IMR-90 (cell line): ENCODE measurements at regions of chrX and their contacts with region 1.

Region 1: DNA sequence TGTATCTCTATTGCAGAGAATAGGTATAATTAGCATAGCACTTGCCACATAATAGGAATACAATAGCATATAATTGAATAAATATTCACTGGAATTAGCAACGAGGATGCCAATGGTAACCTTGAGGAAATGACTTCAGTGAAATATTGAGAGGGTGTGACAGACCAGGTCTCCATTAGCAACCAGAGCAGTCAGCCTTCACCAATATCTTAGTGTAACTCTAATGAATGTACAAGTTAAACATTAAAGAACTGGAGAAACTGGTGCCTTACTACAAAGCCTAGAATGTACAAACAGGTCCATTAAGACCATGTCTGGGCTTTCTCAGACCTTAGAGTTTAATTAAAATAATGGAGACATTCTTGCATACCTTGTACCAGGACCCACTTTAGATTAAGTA is 143.0 kb downstream of the MAGEB17 start:
- DNase-seq: no peak
- ATAC-seq: no peak
- H3K4me3 ChIP-seq: no peak overlapping the region
- H3K27ac ChIP-seq: no peak overlapping the region
- H3K4me1 ChIP-seq: no peaks in the 10 kb centered on the region
- H3K27me3 ChIP-seq: no peaks in the 10 kb centered on the region
- CTCF ChIP-seq: no peak
- POLR2A ChIP-seq: no peak
- RAD21 ChIP-seq: no peak

Region 2: GRCh38 chrX:15349046-15349445 is 961.3 kb before region 1 on chrX:
- CTCF ChIA-PET with region 1: no interaction called
- POLR2A ChIA-PET with region 1: no interaction called
- dilution Hi-C with region 1: no loop called
- in situ Hi-C with region 1: no loop called
- intact Hi-C with region 1: no loop called
- DNase-seq: peak; percentile 73
- ATAC-seq: peak; percentile 90
- H3K4me3 ChIP-seq: no peak overlapping the region
- H3K27ac ChIP-seq: no peak overlapping the region
- H3K4me1 ChIP-seq: no peaks in the 10 kb centered on the region
- H3K27me3 ChIP-seq: peaks cover 4% of the 10 kb centered on the region; the same call in 1 of the 2 replicates
- CTCF ChIP-seq: peak; percentile 66
- POLR2A ChIP-seq: no peak
- RAD21 ChIP-seq: peak; percentile 77

Region 3: DNA sequence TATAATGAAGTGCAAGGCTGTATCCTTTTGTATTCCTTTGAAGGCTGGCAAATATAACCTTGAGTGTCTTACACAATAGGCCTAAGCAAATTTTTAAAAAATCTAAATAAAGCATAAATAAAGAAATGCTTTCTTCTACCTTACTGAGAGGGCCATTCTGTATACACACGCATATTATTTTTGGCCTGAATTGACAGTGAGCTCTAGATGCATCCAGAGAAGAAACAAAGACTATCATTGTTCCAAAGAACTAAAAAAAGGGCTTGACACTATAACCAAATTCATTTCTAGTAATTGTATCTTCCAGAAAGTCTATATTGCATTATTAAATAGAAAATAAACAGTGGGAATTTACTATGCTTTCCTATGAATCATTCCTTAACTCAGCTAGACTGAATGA is 42.9 kb before region 1 on chrX:
- CTCF ChIA-PET with region 1: no interaction called
- POLR2A ChIA-PET with region 1: no interaction called
- dilution Hi-C with region 1: no loop called
- in situ Hi-C with region 1: no loop called
- intact Hi-C with region 1: loop called (anchors 2 kb)
- DNase-seq: no peak
- ATAC-seq: no peak
- H3K4me3 ChIP-seq: no peak overlapping the region
- H3K27ac ChIP-seq: no peak overlapping the region
- H3K4me1 ChIP-seq: no peaks in the 10 kb centered on the region
- H3K27me3 ChIP-seq: no peaks in the 10 kb centered on the region
- CTCF ChIP-seq: no peak
- POLR2A ChIP-seq: no peak
- RAD21 ChIP-seq: no peak

Region 4: GRCh38 chrX:16376056-16376455 is 65.7 kb after region 1 on chrX:
- CTCF ChIA-PET with region 1: no interaction called
- POLR2A ChIA-PET with region 1: no interaction called
- dilution Hi-C with region 1: no loop called
- in situ Hi-C with region 1: no loop called
- intact Hi-C with region 1: no loop called
- DNase-seq: no peak
- ATAC-seq: no peak
- H3K4me3 ChIP-seq: no peak overlapping the region
- H3K27ac ChIP-seq: no peak overlapping the region
- H3K4me1 ChIP-seq: no peaks in the 10 kb centered on the region
- H3K27me3 ChIP-seq: no peaks in the 10 kb centered on the region; the same call in 1 of the 2 replicates
- CTCF ChIP-seq: no peak
- POLR2A ChIP-seq: no peak
- RAD21 ChIP-seq: no peak